Ascending aorta (tissue), 2 donors: ENCODE measurements at regions of chr3 and their contacts with region 1.

Region 1: GRCh38 chr3:86774082-86774691 is 216.8 kb downstream of the VGLL3 start:
- DNase-seq: no peak
- H3K4me3 ChIP-seq: no peak overlapping the region
- H3K27ac ChIP-seq: no peak overlapping the region
- H3K4me1 ChIP-seq: no peaks in the 10 kb centered on the region
- H3K27me3 ChIP-seq: no peaks in the 10 kb centered on the region
- CTCF ChIP-seq: peak; percentile 10 to 62 (median 57)

Region 2: DNA sequence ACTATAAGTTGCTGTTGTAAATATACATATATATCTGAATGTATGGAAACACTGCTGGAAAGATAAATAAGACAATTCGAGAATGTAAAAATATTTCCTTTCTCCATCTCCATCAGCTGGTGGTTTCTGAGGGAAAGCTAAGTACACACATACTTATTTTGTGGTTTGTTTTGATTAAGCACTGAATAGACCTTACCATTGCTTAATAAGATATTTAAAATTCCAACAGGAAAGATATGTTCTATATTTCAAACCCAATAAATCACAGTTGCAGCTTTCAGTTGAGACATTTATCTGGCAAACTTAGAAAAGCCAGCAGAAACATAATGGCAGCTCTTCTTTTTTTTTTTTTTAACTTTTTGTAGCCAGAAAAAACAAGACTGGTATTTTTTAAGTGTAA is 56.4 kb after region 1 on chr3:
- intact Hi-C with region 1: no loop called
- DNase-seq: no peak
- H3K4me3 ChIP-seq: no peak overlapping the region
- H3K27ac ChIP-seq: no peak overlapping the region
- H3K4me1 ChIP-seq: no peaks in the 10 kb centered on the region
- H3K27me3 ChIP-seq: no peaks in the 10 kb centered on the region
- CTCF ChIP-seq: no peak

Region 3: GRCh38 chr3:87167628-87168456 is 393.7 kb after region 1 on chr3:
- intact Hi-C with region 1: loop called (anchors 2 kb)
- DNase-seq: no peak
- H3K4me3 ChIP-seq: peak overlapping the region; percentile 44 to 49
- H3K27ac ChIP-seq: no peak overlapping the region
- H3K4me1 ChIP-seq: peaks cover 0 to 2% of the 10 kb centered on the region in 2 donors
- H3K27me3 ChIP-seq: no peaks in the 10 kb centered on the region
- CTCF ChIP-seq: peak in 2 of 3 experiments; percentile 64 to 68